ENCODE measurements at regions of chr9 and their contacts with region 1.

Region 1: DNA sequence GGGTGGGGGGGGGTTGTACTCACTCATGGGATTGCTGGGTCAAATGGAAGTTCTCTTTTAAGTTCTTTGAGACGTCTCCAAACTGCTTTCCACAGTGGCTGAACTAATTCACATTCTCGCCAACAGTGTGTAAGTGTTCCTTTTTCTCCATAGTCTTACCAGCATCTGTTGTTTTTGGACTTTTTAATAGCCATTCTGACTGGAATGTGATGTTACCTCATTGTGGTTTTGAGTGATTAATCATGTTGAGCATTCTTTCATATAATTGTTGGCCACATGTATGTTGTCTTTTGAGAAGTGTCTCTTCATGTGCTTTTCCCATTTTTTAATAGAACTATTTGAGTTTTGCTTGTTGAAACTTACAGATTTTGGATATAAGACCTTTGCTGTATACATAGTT is 94.9 kb upstream of the PLPPR1 start:
- DNase-seq: no peak
- ATAC-seq: no peak

Region 2: DNA sequence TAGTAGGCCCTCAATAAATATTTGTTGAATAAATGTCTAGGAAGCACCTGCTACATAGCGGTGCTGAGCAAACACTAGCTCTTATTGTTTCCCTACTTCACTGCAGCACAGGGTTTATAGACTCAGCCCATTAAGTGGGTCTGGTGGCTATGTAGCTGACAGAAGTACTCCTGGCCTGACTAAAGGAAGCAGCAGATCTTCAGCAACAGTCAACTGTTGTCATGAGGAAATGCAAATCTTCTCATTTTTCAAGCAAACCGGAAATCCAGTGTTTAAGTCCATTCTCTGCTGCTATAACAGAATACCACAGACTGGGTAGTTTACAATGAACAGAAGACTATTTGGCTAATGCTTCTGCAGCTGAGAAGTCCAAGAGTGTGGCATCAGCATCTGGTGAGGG is 578.1 kb before region 1 on chr9:
- intact Hi-C with region 1: no loop called
- DNase-seq: no peak
- ATAC-seq: no peak

Region 3: DNA sequence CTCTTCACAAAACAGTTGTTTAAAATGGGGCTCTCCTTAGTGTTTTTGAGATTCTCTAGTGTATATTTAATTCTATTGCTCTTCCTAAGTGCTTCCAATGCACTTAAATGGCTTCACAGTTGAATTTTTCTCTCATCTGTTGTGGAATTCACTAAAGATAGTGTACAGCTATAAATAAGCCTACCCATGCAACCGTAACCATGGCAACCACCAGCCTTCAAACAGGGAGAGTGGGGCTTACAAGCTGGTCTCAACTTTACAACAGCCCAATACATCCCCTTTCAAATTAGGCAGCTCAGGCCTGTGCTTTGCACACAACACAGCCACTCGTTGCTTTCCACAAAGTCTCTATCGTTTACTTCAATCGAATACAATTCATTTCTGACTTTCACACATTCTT is 49.1 kb before region 1 on chr9:
- intact Hi-C with region 1: no loop called
- DNase-seq: no peak
- ATAC-seq: no peak

Region 4: GRCh38 chr9:102273952-102274351 is 1340.3 kb after region 1 on chr9:
- intact Hi-C with region 1: loop called (anchors 5 kb)
- DNase-seq: no peak
- ATAC-seq: no peak